ENCODE measurements at regions of chr21 and their contacts with region 1.

Region 1: GRCh38 chr21:33441489-33442477 is 38.0 kb downstream of the TMEM50B start:
- DNase-seq: peak; percentile 73
- CTCF ChIP-seq: no peak

Region 2: DNA sequence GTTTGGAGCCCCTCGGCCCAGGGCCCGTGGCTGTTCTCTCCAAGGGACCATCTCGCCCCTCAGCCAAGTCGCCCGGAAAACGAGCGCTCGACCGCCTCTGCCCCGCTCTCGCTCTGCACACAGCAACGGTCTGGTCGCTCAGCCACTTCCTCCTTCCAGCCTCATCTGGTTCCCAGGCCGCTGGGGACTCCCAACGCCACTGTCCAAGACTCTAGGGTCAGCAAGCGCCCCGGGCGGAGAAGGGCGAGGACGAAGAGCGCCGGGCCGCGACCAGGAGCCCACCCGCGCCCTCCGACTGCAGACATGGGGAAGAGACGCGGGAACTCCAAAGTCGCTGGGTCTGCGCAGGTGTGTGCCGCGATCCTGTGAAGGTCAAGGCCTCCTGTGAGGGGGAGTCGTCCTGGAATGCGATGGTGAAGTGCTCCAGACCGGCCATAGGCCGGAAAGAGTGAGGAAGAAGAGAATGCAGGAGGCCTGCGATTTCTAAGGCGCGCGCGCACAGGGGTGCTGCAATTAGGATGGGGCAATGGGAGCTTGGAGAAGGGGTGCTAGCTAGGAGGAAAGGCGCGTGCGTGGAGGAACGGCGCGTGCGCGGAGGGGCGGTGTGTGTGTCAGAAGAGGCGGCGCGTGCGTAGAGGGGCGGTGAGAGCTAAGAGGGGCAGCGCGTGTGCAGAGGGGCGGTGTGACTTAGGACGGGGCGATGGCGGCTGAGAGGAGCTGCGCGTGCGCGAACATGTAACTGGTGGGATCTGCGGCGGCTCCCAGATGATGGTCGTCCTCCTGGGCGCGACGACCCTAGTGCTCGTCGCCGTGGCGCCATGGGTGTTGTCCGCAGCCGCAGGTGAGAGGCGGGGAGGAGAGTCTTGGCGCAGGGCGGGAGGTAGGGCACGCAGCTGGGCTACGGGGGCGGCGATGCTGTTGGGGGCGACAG is 117.2 kb before region 1 on chr21 and contains the start of gene IFNAR1:
- CTCF ChIA-PET with region 1: interaction called, 16 read pairs
- POLR2A ChIA-PET with region 1: interaction called, 5 read pairs
- DNase-seq: peak; percentile 96
- CTCF ChIP-seq: no peak

Region 3: GRCh38 chr21:33332143-33332542 is 109.6 kb before region 1 on chr21:
- CTCF ChIA-PET with region 1: interaction called, 16 read pairs
- POLR2A ChIA-PET with region 1: no interaction called
- DNase-seq: peak; percentile 41
- CTCF ChIP-seq: no peak

Region 4: DNA sequence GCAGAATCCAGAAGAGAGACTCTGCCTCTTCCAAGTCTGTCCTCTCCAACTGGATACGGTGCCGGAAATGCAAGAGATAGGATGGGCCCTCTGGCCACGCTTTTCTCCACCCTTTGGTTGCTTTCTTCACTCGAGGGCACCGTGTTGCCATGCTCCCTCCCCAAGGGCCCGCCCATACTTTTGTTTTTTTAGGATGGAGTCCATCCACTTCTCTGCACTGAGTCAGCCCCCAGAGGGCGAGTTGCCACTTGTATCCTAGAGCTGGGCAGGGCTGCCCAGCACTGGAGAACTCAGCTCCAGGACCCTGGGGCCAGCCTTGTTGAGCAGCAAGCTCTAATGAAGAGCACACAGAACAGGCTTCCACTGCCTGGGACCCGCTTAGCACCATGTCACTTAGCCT is 13.1 kb before region 1 on chr21:
- CTCF ChIA-PET with region 1: interaction called, 17 read pairs
- POLR2A ChIA-PET with region 1: no interaction called
- DNase-seq: no peak
- CTCF ChIP-seq: no peak

Region 5: GRCh38 chr21:33455686-33456446 is 14.1 kb after region 1 on chr21:
- CTCF ChIA-PET with region 1: interaction called, 44 read pairs
- POLR2A ChIA-PET with region 1: interaction called, 6 read pairs
- DNase-seq: no peak
- CTCF ChIP-seq: no peak

Region 6: GRCh38 chr21:33461538-33462250 is 19.9 kb after region 1 on chr21:
- CTCF ChIA-PET with region 1: interaction called, 44 read pairs
- POLR2A ChIA-PET with region 1: interaction called, 5 read pairs
- DNase-seq: no peak
- CTCF ChIP-seq: no peak

Region 7: GRCh38 chr21:33655591-33656221 is 213.9 kb after region 1 on chr21:
- CTCF ChIA-PET with region 1: no interaction called
- POLR2A ChIA-PET with region 1: no interaction called
- DNase-seq: no peak
- CTCF ChIP-seq: no peak

Measured in GM10248 (cell line).